ENCODE measurements at regions of chr1 and their contacts with region 1.

Region 1: GRCh38 chr1:204417231-204417997 is 5.8 kb upstream of the PPP1R15B start:
- DNase-seq: peak; percentile 100
- H3K4me3 Mint-ChIP-seq: peak overlapping the region; percentile 65
- H3K27ac Mint-ChIP-seq: peak overlapping the region; percentile 91
- H3K4me1 Mint-ChIP-seq: peaks cover 48% of the 10 kb centered on the region
- H3K27me3 Mint-ChIP-seq: no peaks in the 10 kb centered on the region
- CTCF ChIP-seq: no peak

Region 2: GRCh38 chr1:204438628-204439027 is 21.2 kb after region 1 on chr1:
- CTCF ChIA-PET with region 1: interaction called, 214 read pairs
- POLR2A ChIA-PET with region 1: interaction called, 111 read pairs
- intact Hi-C with region 1: loop called (anchors 1 kb)
- DNase-seq: peak; percentile 99
- H3K4me3 Mint-ChIP-seq: peak overlapping the region; percentile 6
- H3K27ac Mint-ChIP-seq: peak overlapping the region; percentile 94
- H3K4me1 Mint-ChIP-seq: peaks cover 65% of the 10 kb centered on the region
- H3K27me3 Mint-ChIP-seq: no peaks in the 10 kb centered on the region
- CTCF ChIP-seq: no peak

Region 3: GRCh38 chr1:204446370-204447111 is 29.1 kb after region 1 on chr1:
- CTCF ChIA-PET with region 1: interaction called, 214 read pairs
- POLR2A ChIA-PET with region 1: interaction called, 20 read pairs
- intact Hi-C with region 1: no loop called
- DNase-seq: peak; percentile 65
- H3K4me3 Mint-ChIP-seq: no peak overlapping the region
- H3K27ac Mint-ChIP-seq: no peak overlapping the region
- H3K4me1 Mint-ChIP-seq: peaks cover 46% of the 10 kb centered on the region
- H3K27me3 Mint-ChIP-seq: no peaks in the 10 kb centered on the region
- CTCF ChIP-seq: peak; percentile 49

Region 4: GRCh38 chr1:204499521-204500468 is 82.4 kb after region 1 on chr1:
- CTCF ChIA-PET with region 1: interaction called, 1,125 read pairs
- POLR2A ChIA-PET with region 1: interaction called, 82 read pairs
- intact Hi-C with region 1: no loop called
- DNase-seq: no peak
- H3K4me3 Mint-ChIP-seq: no peak overlapping the region
- H3K27ac Mint-ChIP-seq: no peak overlapping the region
- H3K4me1 Mint-ChIP-seq: peaks cover 11% of the 10 kb centered on the region
- H3K27me3 Mint-ChIP-seq: peaks cover 25% of the 10 kb centered on the region
- CTCF ChIP-seq: no peak

Region 5: DNA sequence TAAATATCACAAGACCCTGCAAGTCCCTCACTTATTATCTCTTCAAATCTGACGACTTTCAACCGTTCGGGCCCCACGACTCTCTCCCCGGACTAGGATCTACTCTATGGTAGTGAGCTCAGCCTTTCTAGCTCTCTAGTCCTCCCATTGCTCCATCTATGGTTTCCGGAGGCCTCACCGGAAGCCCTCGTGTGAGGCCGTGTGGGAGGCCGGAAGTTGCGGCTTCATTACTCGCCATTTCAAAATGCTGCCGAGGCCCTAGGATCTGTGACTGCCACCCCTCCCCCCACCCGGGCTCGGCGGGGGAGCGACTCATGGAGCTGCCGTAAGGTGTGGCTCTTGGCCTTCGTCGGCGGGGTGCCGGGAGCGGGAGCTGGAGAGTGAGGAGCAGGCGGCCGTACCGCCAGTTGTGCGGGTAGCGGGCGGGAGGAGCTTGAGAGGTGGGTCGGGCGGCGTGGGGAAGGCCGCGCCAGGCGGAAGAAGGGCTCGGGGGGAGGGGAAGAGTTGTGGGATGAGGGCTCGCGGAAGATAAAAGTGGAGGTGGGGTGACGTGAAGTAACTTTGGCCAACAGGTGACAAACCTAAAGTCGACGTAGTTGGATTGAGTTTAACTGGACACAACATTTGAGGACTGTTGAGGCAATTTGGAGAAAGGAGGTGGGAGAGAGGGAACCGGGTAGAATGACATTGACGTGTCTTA is 98.9 kb after region 1 on chr1 and contains the start of gene MDM4:
- CTCF ChIA-PET with region 1: interaction called, 12 read pairs
- POLR2A ChIA-PET with region 1: interaction called, 33 read pairs
- intact Hi-C with region 1: no loop called
- DNase-seq: peak; percentile 100
- H3K4me3 Mint-ChIP-seq: no peak within 1 kb of the TSS
- H3K27ac Mint-ChIP-seq: no peak within 1 kb of the TSS
- H3K4me1 Mint-ChIP-seq: peaks cover 12% of the 10 kb centered on the region
- H3K27me3 Mint-ChIP-seq: no peaks in the 10 kb centered on the region
- CTCF ChIP-seq: no peak
- total RNA-seq, gene MDM4: 162 and 174 TPM in 2 replicates

Region 6: DNA sequence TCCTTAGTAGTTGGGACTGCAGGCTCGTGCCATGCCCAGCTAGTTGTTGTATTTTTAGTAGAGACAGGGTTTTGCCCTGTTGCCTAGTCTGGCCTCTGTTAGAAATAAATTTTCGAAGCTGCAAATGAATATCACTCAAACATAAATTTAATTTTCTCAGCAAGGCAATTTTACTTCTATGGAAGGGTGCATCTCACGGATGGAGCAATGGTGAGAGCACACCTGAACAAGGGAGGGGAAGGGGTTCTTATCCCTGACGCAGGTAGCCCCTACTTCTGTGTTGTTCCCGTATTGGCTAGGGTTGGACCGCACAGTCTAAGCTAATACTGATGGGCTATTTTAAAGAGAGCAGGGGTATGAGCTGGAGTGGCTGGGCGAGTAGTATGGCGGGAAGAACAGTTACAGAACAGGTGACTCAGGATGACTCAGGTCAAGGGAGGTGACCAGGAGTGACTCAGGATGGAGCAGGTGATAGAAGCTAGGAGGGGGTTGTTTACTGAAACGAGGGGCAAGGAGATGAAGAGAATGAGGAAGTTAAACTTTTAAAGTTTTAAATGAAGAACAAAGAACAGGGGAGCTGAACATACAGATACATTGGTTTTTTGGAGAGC is 106.3 kb after region 1 on chr1:
- CTCF ChIA-PET with region 1: no interaction called
- POLR2A ChIA-PET with region 1: interaction called, 14 read pairs
- intact Hi-C with region 1: no loop called
- DNase-seq: peak; percentile 50
- H3K4me3 Mint-ChIP-seq: peak overlapping the region; percentile 1
- H3K27ac Mint-ChIP-seq: peak overlapping the region; percentile 44
- H3K4me1 Mint-ChIP-seq: peaks cover 33% of the 10 kb centered on the region
- H3K27me3 Mint-ChIP-seq: no peaks in the 10 kb centered on the region
- CTCF ChIP-seq: no peak